H1 (cell line): ENCODE measurements at regions of chr1 and their contacts with region 1.

Region 1: GRCh38 chr1:226121587-226122400 is 59.3 kb downstream of the H3-3A start:
- DNase-seq: peak in 1 of 2 experiments; percentile 89
- H3K4me3 ChIP-seq: peak overlapping the region; percentile 54 to 89 (median 68)
- H3K27ac ChIP-seq: peak overlapping the region; percentile 90; the same call in 1 of the 2 replicates
- H3K4me1 ChIP-seq: peaks cover 4 to 27% (median 14%) of the 10 kb centered on the region in 4 experiments
- H3K27me3 ChIP-seq: peaks cover 0 to 7% (median 4%) of the 10 kb centered on the region in 4 experiments; a peak in 3 of 7 replicates
- CTCF ChIP-seq: peak; percentile 75 to 88 (median 79)
- EP300 ChIP-seq: no peak
- POLR2A ChIP-seq: peak in 1 of 2 experiments; percentile 82; a peak in 1 of 3 replicates
- RAD21 ChIP-seq: peak; percentile 50 to 83

Region 2: GRCh38 chr1:225908773-225909172 is 213.0 kb before region 1 on chr1:
- CTCF ChIA-PET with region 1: no interaction called
- POLR2A ChIA-PET with region 1: no interaction called
- DNase-seq: no peak
- H3K4me3 ChIP-seq: no peak overlapping the region
- H3K27ac ChIP-seq: no peak overlapping the region
- H3K4me1 ChIP-seq: peaks cover 0 to 7% (median 1%) of the 10 kb centered on the region in 4 experiments; a peak in 2 of 7 replicates
- H3K27me3 ChIP-seq: no peaks in the 10 kb centered on the region; a peak in 2 of 7 replicates
- CTCF ChIP-seq: no peak
- EP300 ChIP-seq: no peak
- POLR2A ChIP-seq: no peak
- RAD21 ChIP-seq: no peak

Region 3: GRCh38 chr1:225990705-225991464 is 130.9 kb before region 1 on chr1:
- CTCF ChIA-PET with region 1: no interaction called
- POLR2A ChIA-PET with region 1: no interaction called
- DNase-seq: no peak
- H3K4me3 ChIP-seq: no peak overlapping the region
- H3K27ac ChIP-seq: no peak overlapping the region
- H3K4me1 ChIP-seq: no peaks in the 10 kb centered on the region
- H3K27me3 ChIP-seq: no peaks in the 10 kb centered on the region
- CTCF ChIP-seq: no peak
- EP300 ChIP-seq: no peak
- POLR2A ChIP-seq: no peak
- RAD21 ChIP-seq: no peak

Region 4: GRCh38 chr1:226062558-226063223 is 59.1 kb before region 1 on chr1 and contains the start of gene H3-3A:
- CTCF ChIA-PET with region 1: interaction called, 53 read pairs
- POLR2A ChIA-PET with region 1: interaction called, 23 read pairs
- DNase-seq: peak; percentile 82 to 98
- H3K4me3 ChIP-seq: peak within 1 kb of the TSS; percentile 91 to 100 (median 94)
- H3K27ac ChIP-seq: peak within 1 kb of the TSS; percentile 95
- H3K4me1 ChIP-seq: peaks cover 0 to 9% (median 2%) of the 10 kb centered on the region in 4 experiments; a peak in 4 of 7 replicates
- H3K27me3 ChIP-seq: no peaks in the 10 kb centered on the region
- CTCF ChIP-seq: no peak
- EP300 ChIP-seq: no peak
- POLR2A ChIP-seq: peak; percentile 80 to 97
- RAD21 ChIP-seq: no peak
- total RNA-seq, gene H3-3A: 1,213 and 1,223 TPM in 2 replicates

Region 5: DNA sequence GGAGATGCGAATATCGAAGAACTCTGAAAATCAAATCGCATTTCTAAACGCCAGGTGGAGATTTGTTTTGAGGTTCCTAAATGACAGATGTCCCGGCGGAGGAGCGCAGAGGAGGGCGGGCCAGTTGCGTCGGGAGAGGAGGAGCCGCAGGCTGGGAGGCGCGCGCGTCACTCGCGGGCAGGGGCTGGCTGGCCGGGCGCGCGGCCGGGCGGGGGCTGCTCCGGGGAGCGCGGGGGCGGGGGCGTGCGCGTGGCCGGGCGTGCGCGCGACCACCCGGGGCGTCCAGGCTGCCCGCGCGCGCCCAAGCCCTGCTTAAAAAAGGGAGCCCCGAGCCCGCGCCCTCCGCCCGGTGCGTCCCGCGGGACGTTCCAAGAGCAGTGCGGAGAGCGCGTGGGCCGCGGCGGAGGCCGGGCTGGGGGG is 12.0 kb before region 1 on chr1:
- CTCF ChIA-PET with region 1: interaction called, 35 read pairs
- POLR2A ChIA-PET with region 1: interaction called, 47 read pairs
- DNase-seq: peak in 1 of 2 experiments; percentile 82
- H3K4me3 ChIP-seq: peak overlapping the region; percentile 59 to 83 (median 60)
- H3K27ac ChIP-seq: no peak overlapping the region
- H3K4me1 ChIP-seq: peaks cover 15 to 37% (median 29%) of the 10 kb centered on the region in 4 experiments
- H3K27me3 ChIP-seq: peaks cover 0 to 6% (median 3%) of the 10 kb centered on the region in 4 experiments; a peak in 5 of 7 replicates
- CTCF ChIP-seq: 0 out of 4 replicates have a peak, but pooled peaks of 1 of the 3 experiments have one; percentile 8
- EP300 ChIP-seq: no peak
- POLR2A ChIP-seq: no peak
- RAD21 ChIP-seq: no peak; a peak in 1 of 4 replicates

Region 6: GRCh38 chr1:226158457-226158856 is 36.7 kb after region 1 on chr1:
- CTCF ChIA-PET with region 1: interaction called, 13 read pairs
- POLR2A ChIA-PET with region 1: no interaction called
- DNase-seq: no peak
- H3K4me3 ChIP-seq: no peak overlapping the region
- H3K27ac ChIP-seq: no peak overlapping the region
- H3K4me1 ChIP-seq: no peaks in the 10 kb centered on the region
- H3K27me3 ChIP-seq: no peaks in the 10 kb centered on the region
- CTCF ChIP-seq: no peak
- EP300 ChIP-seq: no peak
- POLR2A ChIP-seq: no peak
- RAD21 ChIP-seq: no peak

Region 7: DNA sequence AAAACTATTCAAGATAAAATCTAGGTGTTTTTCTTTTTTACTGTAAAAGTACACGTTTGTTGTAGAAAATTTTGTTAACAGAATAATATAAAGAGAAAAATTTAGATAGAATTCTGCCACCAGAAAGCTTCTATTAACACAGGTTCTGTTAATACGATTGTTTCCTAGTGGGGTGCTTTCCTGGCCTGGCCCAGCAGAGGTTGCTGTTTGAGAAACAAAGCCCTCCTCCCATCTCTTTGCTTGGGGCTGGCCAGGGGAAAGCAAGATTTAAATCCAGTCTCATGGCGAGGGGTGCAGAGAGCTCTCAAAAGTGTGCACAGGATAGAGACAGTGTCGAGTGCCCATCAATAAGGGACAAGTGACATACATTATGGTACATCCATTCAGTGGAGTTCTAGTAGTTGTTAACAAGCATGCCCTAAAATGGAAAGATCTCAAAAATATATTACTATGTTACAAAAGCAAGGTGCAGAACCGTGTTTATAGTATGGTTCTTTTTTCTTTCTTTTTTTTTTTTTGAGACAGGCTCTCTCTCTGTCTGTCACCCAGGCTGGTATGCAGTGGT is 79.3 kb after region 1 on chr1:
- CTCF ChIA-PET with region 1: interaction called, 139 read pairs
- POLR2A ChIA-PET with region 1: interaction called, 5 read pairs
- DNase-seq: no peak
- H3K4me3 ChIP-seq: no peak overlapping the region
- H3K27ac ChIP-seq: no peak overlapping the region
- H3K4me1 ChIP-seq: peaks cover 0 to 4% (median 2%) of the 10 kb centered on the region in 4 experiments; a peak in 3 of 7 replicates
- H3K27me3 ChIP-seq: no peaks in the 10 kb centered on the region; a peak in 1 of 7 replicates
- CTCF ChIP-seq: peak; percentile 42 to 66 (median 63)
- EP300 ChIP-seq: no peak
- POLR2A ChIP-seq: no peak
- RAD21 ChIP-seq: peak; percentile 71 to 80

Region 8: DNA sequence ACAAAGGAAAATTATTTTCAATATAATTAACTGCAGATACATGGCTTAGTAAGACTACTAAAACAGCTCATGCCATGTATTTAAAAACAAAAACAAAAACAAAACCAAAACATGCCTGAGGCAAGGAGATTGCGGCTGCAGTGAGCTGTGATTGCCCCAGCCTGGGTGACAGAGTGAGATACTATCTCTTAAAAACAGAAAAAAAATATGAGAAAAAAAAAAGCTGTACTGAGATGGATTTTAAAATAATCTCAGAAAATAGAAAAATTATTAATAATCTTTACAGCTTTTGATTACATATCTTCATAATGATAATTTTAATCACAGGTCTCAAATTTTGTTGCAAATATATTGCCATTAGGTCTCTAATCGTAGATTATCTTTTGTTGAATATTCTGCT is 211.2 kb after region 1 on chr1:
- CTCF ChIA-PET with region 1: interaction called, 22 read pairs
- POLR2A ChIA-PET with region 1: no interaction called
- DNase-seq: no peak
- H3K4me3 ChIP-seq: peak overlapping the region in 1 of 4 experiments; percentile 34; a peak in 1 of 8 replicates
- H3K27ac ChIP-seq: no peak overlapping the region
- H3K4me1 ChIP-seq: peaks cover 0 to 3% (median 0%) of the 10 kb centered on the region in 4 experiments; a peak in 1 of 7 replicates
- H3K27me3 ChIP-seq: no peaks in the 10 kb centered on the region
- CTCF ChIP-seq: no peak
- EP300 ChIP-seq: no peak
- POLR2A ChIP-seq: no peak
- RAD21 ChIP-seq: no peak

Region 9: GRCh38 chr1:226487921-226488546 is 366.2 kb after region 1 on chr1:
- CTCF ChIA-PET with region 1: no interaction called
- POLR2A ChIA-PET with region 1: no interaction called
- DNase-seq: no peak
- H3K4me3 ChIP-seq: no peak overlapping the region
- H3K27ac ChIP-seq: no peak overlapping the region
- H3K4me1 ChIP-seq: peaks cover 0 to 3% (median 1%) of the 10 kb centered on the region in 4 experiments; a peak in 3 of 7 replicates
- H3K27me3 ChIP-seq: no peaks in the 10 kb centered on the region
- CTCF ChIP-seq: no peak
- EP300 ChIP-seq: no peak
- POLR2A ChIP-seq: no peak
- RAD21 ChIP-seq: no peak